Left ventricle myocardium superior (tissue), 1 donor: ENCODE measurements at regions of chr14 and their contacts with region 1.

Region 1: GRCh38 chr14:91177073-91178034 is 63.5 kb downstream of the DGLUCY start:
- DNase-seq: peak; percentile 54
- ATAC-seq: peak; percentile 50

Region 2: GRCh38 chr14:91241863-91242262 is 64.5 kb after region 1 on chr14:
- intact Hi-C with region 1: no loop called
- DNase-seq: no peak
- ATAC-seq: no peak

Region 3: DNA sequence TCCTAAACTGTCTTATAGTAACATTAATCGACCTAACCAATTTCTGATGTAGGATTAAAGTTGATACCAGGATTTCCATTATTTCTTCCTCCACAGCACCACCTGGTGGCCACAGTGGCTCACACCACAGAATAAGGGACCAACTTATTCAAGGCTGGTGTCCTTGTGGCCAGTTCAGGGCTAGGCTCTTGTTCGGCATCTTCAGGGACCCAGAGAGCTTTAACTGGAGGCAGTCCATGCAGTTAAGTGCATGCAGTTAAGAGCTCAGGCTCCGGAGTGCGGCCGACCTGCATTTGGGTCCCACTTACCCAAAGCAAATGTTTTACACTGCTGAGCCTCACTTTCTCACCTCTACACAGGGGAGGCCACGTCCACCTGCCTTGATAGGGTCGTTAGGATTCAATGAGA is 109.2 kb after region 1 on chr14:
- intact Hi-C with region 1: loop called (anchors 5 kb)
- DNase-seq: peak; percentile 80
- ATAC-seq: peak; percentile 69

Region 4: DNA sequence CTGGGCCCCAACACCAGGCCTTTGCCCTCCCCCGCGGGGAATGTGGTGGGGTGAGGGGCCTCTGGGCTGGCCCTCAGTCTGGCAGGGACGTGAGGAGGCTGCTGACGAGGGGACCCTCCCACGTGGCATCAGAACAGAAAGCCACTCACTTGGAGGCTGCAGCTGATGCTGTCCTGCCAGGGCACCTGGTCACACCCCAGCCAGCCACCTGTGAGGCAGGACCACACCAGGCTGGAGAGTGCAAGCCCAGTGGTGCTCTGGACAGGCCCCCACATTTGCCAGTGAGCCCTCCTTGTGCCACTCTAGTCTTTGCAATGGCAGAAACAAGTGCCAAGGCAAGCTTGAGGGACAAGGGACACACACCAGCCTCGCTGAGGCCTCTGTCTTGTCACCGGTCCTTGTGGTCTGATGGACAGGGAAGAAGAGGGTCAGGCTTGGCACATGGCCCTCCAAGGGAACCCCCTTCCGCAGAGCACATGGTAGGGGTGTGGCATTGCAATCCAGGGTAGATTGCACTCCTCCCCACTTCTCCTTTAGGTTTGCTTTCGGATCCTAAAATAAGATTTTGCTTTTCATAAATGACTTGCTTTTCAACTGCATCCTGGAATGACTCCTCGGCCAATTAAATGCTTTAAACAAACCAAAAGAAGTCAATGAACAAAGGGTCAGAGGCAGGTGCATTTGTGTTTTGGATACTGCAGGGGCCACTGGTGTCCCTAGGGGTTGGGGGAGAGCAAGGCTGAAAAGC is 186.6 kb after region 1 on chr14:
- intact Hi-C with region 1: no loop called
- DNase-seq: no peak
- ATAC-seq: peak; percentile 52